Activated CD4-positive, alpha-beta T cell treated with anti-CD3 and anti-CD28 coated beads, Interleukin-2, amount 10 ng/mL, durations not matched to agents 7 days and 5 days (primary cell): ENCODE measurements at regions of chr11 and their contacts with region 1.

Region 1: DNA sequence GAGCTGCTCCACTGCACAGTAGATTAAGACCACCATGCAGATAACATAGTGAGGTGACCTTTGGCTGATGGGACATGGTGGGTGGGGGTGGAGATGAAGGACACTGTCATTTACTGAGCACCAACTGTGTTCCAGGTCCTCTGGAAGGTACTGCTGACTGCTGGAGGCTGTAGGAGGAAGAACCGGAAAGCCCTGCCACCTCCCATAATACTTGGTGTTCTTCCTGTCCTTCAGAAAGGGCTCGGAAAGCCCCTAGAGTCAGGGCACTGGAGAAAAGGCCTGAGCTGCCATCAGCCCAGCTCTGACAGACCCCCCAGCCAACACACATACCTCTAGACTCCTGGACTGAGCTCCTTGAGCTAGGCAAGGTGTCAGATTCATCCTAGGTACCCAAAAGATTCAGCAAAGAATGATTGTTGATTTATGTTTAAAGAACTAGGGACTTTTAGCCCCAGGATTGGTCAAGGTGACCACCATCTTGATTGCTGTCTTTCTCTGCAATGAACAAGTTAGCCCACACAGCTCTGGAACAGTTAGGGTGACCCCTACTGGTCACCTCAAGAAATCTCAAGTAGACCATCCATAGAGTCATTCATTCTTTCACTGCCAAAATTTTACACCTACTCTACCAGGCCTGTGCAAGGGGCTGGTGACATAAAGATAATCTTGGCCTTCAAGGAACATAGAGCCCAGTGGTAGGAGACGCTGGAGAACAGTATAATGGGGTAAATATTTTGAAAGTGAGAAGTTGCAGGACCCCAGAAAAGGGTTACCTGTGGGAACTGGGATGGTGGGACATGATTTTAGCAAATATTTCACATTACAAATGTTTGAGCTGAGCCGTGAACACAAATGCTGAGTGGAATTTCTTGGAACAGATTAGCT is 39.4 kb downstream of the IRAG1 start:
- DNase-seq: peak; percentile 53
- H3K4me3 Mint-ChIP-seq: no peak overlapping the region
- H3K27ac Mint-ChIP-seq: no peak overlapping the region
- H3K4me1 Mint-ChIP-seq: peaks cover 22% of the 10 kb centered on the region
- H3K27me3 Mint-ChIP-seq: no peaks in the 10 kb centered on the region

Region 2: DNA sequence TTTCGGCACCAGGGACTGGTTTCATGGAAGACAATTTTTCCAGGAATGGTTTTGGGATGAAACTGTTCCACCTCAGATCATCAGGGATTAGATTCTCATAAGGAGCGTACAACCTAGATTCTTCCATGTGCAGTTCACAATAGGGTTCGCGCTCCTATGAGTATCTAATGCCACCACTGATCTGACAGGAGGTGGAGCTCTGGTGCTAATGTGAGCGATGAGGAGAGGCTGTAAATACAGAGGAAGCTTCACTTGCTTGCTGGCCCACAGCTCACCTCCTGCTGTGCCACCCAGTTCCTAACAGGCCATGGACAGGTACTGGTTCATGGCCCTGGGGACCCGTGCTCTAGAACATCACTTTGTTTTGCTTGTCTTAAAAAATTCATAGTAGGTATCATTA is 240.9 kb before region 1 on chr11:
- CTCF ChIA-PET with region 1: interaction called, 15 read pairs
- POLR2A ChIA-PET with region 1: no interaction called
- DNase-seq: peak; percentile 72
- H3K4me3 Mint-ChIP-seq: no peak overlapping the region
- H3K27ac Mint-ChIP-seq: no peak overlapping the region
- H3K4me1 Mint-ChIP-seq: peaks cover 49% of the 10 kb centered on the region
- H3K27me3 Mint-ChIP-seq: peaks cover 4% of the 10 kb centered on the region

Region 3: DNA sequence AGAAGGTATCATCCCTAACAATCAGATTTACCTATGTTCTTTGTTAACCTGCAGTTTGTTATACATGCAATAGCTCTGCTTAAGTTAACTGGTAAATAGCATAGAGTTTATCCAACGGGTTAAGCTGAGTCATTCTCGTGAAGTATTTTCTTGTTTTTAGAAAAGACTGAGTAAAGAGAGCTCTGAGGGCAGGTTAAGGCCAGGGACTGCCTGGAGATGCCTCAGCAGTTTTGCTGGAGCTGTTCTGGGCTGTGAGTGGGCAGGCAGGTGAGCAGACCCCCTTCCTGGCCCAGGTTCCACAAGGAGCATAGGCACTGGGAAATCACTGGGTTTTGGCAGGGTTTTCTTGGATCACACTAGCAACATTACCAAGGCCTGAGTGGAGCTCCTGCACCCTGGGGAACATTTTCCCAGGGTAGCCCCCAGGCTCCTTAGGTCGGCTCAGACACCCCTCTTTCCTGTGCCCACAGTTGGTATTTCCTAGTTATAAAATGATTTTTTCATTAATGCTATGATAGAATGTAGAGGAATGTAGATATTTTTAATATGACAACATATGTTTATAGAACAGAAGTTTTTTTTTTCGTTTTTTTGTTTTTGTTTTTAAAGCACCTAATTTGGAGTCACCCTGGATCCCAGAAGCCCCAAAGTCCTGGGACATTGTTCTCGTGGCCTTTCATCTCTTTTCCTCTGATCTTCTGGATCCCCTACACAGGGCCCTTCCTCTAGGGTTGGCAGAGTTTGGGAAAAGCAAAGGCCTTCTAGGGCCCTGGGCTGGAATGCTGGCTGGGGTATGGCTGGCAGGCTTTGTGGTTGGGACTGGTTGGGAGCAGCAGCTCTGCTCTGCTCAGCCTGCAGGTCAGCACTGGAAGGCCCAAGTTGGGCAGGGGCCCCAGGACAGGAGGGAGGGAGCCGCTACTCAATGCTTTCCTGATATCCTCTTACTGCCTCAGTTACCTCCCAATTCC is 12.7 kb after region 1 on chr11:
- CTCF ChIA-PET with region 1: interaction called, 37 read pairs
- POLR2A ChIA-PET with region 1: no interaction called
- DNase-seq: no peak
- H3K4me3 Mint-ChIP-seq: no peak overlapping the region
- H3K27ac Mint-ChIP-seq: no peak overlapping the region
- H3K4me1 Mint-ChIP-seq: no peaks in the 10 kb centered on the region
- H3K27me3 Mint-ChIP-seq: peaks cover 4% of the 10 kb centered on the region